Body of pancreas (tissue), 4 donors: ENCODE measurements at regions of chr3 and their contacts with region 1.

Region 1: DNA sequence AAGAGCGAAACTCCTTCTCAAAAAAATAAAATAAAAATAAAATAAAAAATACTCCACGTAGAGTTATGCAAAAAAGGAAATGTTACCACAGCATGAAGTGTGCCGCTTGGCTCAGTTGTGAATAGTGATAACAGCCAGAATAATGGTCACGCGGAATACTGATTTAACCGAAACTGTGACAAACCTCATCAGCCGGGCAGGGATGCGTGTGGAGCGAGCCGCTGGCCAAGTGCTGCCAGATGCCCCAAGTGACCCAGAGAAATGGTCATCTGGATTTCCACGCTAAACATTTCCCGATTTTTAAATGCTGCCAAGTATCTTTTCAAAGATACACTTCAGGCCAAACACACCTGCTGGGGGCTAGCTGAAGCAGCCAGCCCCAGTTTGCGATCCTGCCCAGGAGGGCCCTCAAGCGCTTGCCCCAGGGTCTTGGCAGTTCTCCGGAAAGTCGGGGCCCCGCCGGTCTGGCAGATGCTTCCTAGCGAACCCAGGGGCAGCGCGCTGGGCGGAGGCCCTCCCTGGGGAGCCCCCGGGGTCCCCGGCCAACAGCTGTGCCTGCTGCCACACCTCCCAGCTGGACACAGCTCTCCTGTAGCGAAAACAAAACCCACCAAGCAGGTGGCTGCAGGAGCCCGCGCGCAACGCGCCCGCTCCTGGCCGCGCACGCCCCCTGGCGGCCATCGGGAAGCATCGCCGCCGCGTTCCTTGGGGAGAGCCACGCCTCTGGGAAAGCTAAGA is 35.1 kb downstream of the CMTM6 start:
- DNase-seq: peak; percentile 68 to 83 (median 80)
- ATAC-seq: peak; percentile 86
- H3K4me3 ChIP-seq: peak overlapping the region in 1 of 2 donors; percentile 13
- H3K27ac ChIP-seq: peak overlapping the region in 3 of 4 donors; percentile 59 to 77 (median 60)
- H3K4me1 ChIP-seq: peaks cover 40% of the 10 kb centered on the region
- H3K27me3 ChIP-seq: no peaks in the 10 kb centered on the region
- CTCF ChIP-seq: peak; percentile 93 to 99 (median 98)
- POLR2A ChIP-seq: peak; percentile 5 to 32 (median 17)

Region 2: DNA sequence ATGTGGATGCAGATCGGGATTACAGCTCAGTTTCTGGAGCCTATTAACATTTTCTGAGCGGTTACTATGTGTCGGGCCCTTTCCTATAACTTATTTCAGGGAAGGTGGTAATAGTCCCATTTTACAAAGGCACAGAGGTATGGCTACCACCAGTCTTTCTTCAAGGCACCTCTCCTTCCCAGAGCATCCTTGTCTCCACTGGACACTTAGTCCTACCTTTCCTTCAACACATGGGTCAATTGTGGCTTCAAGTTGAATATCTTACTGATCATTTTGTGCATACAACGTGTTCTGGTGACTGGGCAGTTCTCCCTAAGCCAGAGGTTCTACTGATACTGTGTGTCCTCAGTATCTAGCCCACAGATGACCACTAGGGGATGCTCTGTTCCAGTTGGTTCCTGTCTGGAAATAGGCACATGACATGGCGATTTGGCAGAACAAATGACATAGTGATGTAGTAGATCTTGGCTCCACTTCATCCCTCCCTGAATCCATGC is 289.8 kb before region 1 on chr3:
- intact Hi-C with region 1: loop called (anchors 10 kb)
- DNase-seq: peak; percentile 84 to 93 (median 86)
- ATAC-seq: peak; percentile 95
- H3K4me3 ChIP-seq: no peak overlapping the region
- H3K27ac ChIP-seq: no peak overlapping the region
- H3K4me1 ChIP-seq: peaks cover 6% of the 10 kb centered on the region
- H3K27me3 ChIP-seq: no peaks in the 10 kb centered on the region
- CTCF ChIP-seq: peak in 6 of 7 experiments; percentile 58 to 97 (median 94)
- POLR2A ChIP-seq: no peak

Region 3: DNA sequence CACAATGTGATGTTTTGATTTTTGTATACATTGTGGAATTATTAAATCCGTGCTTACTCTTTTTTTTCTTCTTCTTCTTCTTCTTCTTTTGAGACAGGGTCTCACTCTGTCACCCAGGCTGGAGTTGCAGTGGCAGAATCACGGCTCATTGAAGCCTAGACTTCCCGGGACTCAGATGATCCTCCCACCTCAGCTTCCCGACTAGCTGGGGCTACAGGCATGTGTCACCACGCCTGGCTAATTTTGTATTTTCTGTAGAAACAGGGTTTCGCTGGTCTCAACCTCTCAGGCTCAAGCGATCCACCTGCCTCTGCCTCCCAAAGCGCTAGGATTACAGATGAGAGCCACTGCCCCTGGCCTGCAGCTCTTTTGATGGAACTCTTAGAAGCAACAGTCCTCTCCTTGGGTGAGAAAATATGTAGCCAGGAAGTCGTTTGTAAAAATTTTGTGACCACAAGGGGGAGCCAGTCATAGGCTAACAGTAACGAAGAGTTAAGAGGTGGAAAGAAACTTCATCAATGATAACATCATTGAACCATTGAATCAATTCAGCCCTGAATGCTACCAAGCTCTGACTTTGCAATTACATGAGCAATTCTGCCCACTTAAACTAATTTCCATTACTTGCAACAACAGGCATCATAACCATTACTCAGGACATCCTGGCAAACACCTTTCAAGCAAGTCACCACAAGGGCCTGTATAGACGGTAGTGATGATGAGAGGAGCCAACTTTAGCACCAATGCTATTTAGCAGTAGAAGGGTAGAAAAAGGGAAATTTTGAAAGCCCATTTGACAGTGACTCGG is 92.5 kb before region 1 on chr3:
- intact Hi-C with region 1: loop called (anchors 5 kb)
- DNase-seq: peak; percentile 66 to 78 (median 70)
- ATAC-seq: peak; percentile 68
- H3K4me3 ChIP-seq: no peak overlapping the region
- H3K27ac ChIP-seq: no peak overlapping the region
- H3K4me1 ChIP-seq: no peaks in the 10 kb centered on the region
- H3K27me3 ChIP-seq: no peaks in the 10 kb centered on the region
- CTCF ChIP-seq: peak; percentile 46 to 74 (median 68)
- POLR2A ChIP-seq: no peak

Region 4: DNA sequence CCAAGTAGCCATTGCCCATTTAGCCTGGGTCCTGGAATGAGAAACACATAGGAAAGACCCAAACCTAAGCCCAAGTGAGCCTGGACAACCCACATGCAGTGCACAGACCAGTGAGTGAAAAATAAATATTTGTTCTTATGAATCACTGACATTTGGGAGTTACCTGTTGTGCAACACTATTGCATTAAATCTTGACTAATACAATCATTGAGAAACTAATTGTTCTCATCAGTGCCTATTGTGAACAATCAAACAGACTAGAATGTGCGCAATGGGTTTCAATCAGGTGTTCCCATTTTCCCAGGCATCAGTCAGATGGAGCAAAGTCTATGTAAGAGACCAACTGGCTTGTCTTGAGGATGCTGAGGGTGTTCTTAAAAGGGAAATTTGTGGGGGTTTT is 162.8 kb after region 1 on chr3:
- intact Hi-C with region 1: no loop called
- DNase-seq: no peak
- ATAC-seq: no peak
- H3K4me3 ChIP-seq: no peak overlapping the region
- H3K27ac ChIP-seq: no peak overlapping the region
- H3K4me1 ChIP-seq: no peaks in the 10 kb centered on the region
- H3K27me3 ChIP-seq: no peaks in the 10 kb centered on the region
- CTCF ChIP-seq: no peak
- POLR2A ChIP-seq: no peak